ENCODE measurements at regions of chrX and their contacts with region 1.

Region 1: GRCh38 chrX:107776649-107777535 is 641 bp upstream of the NCBP2L start:
- DNase-seq: peak; percentile 87
- H3K4me3 ChIP-seq: peak overlapping the region in 2 of 3 experiments; percentile 45 to 53
- H3K27ac ChIP-seq: no peak overlapping the region
- H3K4me1 ChIP-seq: peaks cover 10% of the 10 kb centered on the region
- H3K27me3 ChIP-seq: no peaks in the 10 kb centered on the region
- CTCF ChIP-seq: peak; percentile 45 to 48
- POLR2A ChIP-seq: no peak

Region 2: DNA sequence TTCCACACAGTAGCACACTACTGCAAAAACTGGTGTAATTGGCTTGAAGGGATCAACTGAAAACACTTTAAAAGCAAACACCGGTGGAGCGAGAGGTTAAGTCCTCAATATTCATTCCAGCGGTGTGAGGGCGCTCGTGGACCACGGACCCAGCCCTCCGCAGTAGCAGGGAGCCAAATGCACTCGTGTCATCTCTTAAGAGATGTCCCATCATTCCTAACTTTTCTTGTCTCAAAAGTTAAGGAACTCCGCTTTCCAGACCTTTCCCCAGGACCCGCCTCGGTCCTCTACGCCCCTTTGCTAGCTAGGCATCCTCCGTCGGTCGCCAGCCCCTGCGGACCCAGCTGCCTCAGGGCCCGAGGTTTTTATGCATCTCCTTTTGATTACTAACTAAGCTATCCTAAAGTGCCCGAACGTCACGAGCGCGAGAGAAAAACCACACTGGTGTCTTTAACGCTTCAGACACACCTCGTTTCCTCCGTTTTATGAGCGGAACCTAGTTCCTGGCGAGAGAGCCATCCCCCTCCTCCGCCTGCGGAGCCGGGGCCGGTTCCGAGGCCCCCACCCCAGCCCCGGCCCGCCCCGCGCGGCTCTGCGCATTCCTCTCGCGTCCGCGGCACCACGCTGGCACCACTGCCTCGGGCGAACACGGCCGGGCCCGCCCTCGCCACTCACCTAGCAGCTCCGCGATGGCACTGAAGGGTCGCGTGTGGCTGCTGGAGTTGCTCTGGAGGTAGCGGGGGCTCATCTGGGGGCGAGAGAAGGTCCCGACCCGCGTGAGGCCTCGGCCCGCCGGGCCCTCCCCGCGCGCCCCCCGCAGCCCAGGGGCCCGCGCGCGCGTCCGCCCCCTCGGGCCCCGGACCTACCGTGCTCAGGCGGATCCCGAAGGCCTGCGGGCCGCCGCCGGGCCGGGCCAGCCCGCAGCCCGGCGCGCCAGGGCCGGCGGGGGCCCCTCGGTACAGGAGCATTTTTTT is 777.6 kb before region 1 on chrX:
- CTCF ChIA-PET with region 1: no interaction called
- POLR2A ChIA-PET with region 1: no interaction called
- dilution Hi-C with region 1: no loop called
- intact Hi-C with region 1: loop called (anchors 1 kb)
- DNase-seq: peak; percentile 54
- H3K4me3 ChIP-seq: peak overlapping the region; percentile 23 to 69 (median 53)
- H3K27ac ChIP-seq: no peak overlapping the region
- H3K4me1 ChIP-seq: no peaks in the 10 kb centered on the region
- H3K27me3 ChIP-seq: no peaks in the 10 kb centered on the region
- CTCF ChIP-seq: peak; percentile 16 to 38
- POLR2A ChIP-seq: no peak

Region 3: GRCh38 chrX:107654872-107655761 is 121.8 kb before region 1 on chrX:
- CTCF ChIA-PET with region 1: interaction called, 109 read pairs
- POLR2A ChIA-PET with region 1: no interaction called
- dilution Hi-C with region 1: no loop called
- intact Hi-C with region 1: loop called (anchors 1 kb)
- DNase-seq: peak; percentile 49
- H3K4me3 ChIP-seq: no peak overlapping the region
- H3K27ac ChIP-seq: peak overlapping the region; percentile 45
- H3K4me1 ChIP-seq: peaks cover 6% of the 10 kb centered on the region
- H3K27me3 ChIP-seq: no peaks in the 10 kb centered on the region
- CTCF ChIP-seq: peak; percentile 65 to 74
- POLR2A ChIP-seq: no peak

Region 4: GRCh38 chrX:107716816-107717700 is 59.8 kb before region 1 on chrX:
- CTCF ChIA-PET with region 1: interaction called, 76 read pairs
- POLR2A ChIA-PET with region 1: interaction called, 8 read pairs
- dilution Hi-C with region 1: no loop called
- intact Hi-C with region 1: loop called (anchors 1 kb)
- DNase-seq: peak; percentile 84
- H3K4me3 ChIP-seq: peak overlapping the region; percentile 49 to 84 (median 58)
- H3K27ac ChIP-seq: peak overlapping the region; percentile 77
- H3K4me1 ChIP-seq: peaks cover 11% of the 10 kb centered on the region
- H3K27me3 ChIP-seq: no peaks in the 10 kb centered on the region
- CTCF ChIP-seq: no peak
- POLR2A ChIP-seq: peak; percentile 93

Region 5: DNA sequence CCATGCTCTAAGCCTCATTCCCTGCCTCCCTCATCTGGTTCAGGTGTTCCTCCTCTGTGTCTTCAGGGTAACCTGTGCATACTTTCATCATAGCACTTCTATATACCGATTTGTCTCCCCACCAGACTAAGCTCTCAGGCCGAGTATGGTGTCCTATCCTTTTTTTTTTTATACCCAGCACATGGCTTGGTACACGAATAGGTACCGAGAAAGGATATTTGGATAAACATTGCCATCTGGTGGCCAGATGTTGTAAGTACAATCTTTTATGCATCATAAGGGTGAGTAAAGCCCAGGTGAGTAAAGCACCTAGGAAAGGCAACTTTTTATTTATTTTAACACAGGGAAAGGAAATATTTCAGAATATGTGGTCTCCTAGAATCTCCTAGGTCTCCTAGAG is 117.1 kb after region 1 on chrX:
- CTCF ChIA-PET with region 1: interaction called, 39 read pairs
- POLR2A ChIA-PET with region 1: no interaction called
- dilution Hi-C with region 1: no loop called
- intact Hi-C with region 1: loop called (anchors 1 kb)
- DNase-seq: peak; percentile 47
- H3K4me3 ChIP-seq: no peak overlapping the region
- H3K27ac ChIP-seq: no peak overlapping the region
- H3K4me1 ChIP-seq: no peaks in the 10 kb centered on the region
- H3K27me3 ChIP-seq: no peaks in the 10 kb centered on the region
- CTCF ChIP-seq: peak in 1 of 2 donors; percentile 15
- POLR2A ChIP-seq: no peak

Region 6: GRCh38 chrX:108312938-108313337 is 536.0 kb after region 1 on chrX:
- CTCF ChIA-PET with region 1: no interaction called
- POLR2A ChIA-PET with region 1: no interaction called
- dilution Hi-C with region 1: no loop called
- intact Hi-C with region 1: no loop called
- DNase-seq: peak; percentile 11
- H3K4me3 ChIP-seq: no peak overlapping the region
- H3K27ac ChIP-seq: no peak overlapping the region
- H3K4me1 ChIP-seq: no peaks in the 10 kb centered on the region
- H3K27me3 ChIP-seq: no peaks in the 10 kb centered on the region
- CTCF ChIP-seq: no peak
- POLR2A ChIP-seq: no peak

Measured in endothelial cell of umbilical vein (primary cell).